HCT116 (cell line): ENCODE measurements at regions of chr6 and their contacts with region 1.

Region 1: GRCh38 chr6:41705996-41706835 is 29.2 kb downstream of the TFEB start:
- DNase-seq: no peak
- ATAC-seq: peak; percentile 97
- H3K4me3 ChIP-seq: no peak overlapping the region
- H3K27ac ChIP-seq: peak overlapping the region; percentile 40
- H3K4me1 ChIP-seq: peaks cover 0 to 14% of the 10 kb centered on the region in 2 experiments; a peak in 3 of 4 replicates
- H3K27me3 ChIP-seq: no peaks in the 10 kb centered on the region
- CTCF ChIP-seq: peak; percentile 84 to 93 (median 90)
- POLR2A ChIP-seq: no peak
- RAD21 ChIP-seq: peak; percentile 83

Region 2: GRCh38 chr6:41694815-41695526 is 11.2 kb before region 1 on chr6:
- CTCF ChIA-PET with region 1: interaction called, 19 read pairs
- POLR2A ChIA-PET with region 1: no interaction called
- RAD21 ChIA-PET with region 1: no interaction called
- intact Hi-C with region 1: no loop called
- DNase-seq: no peak
- ATAC-seq: peak; percentile 46; the same call in 1 of the 2 replicates
- H3K4me3 ChIP-seq: no peak overlapping the region
- H3K27ac ChIP-seq: no peak overlapping the region
- H3K4me1 ChIP-seq: peaks cover 5 to 6% of the 10 kb centered on the region in 2 experiments; a peak in 2 of 4 replicates
- H3K27me3 ChIP-seq: no peaks in the 10 kb centered on the region
- CTCF ChIP-seq: no peak
- POLR2A ChIP-seq: no peak
- RAD21 ChIP-seq: no peak